ENCODE measurements at regions of chr19 and their contacts with region 1.

Region 1: DNA sequence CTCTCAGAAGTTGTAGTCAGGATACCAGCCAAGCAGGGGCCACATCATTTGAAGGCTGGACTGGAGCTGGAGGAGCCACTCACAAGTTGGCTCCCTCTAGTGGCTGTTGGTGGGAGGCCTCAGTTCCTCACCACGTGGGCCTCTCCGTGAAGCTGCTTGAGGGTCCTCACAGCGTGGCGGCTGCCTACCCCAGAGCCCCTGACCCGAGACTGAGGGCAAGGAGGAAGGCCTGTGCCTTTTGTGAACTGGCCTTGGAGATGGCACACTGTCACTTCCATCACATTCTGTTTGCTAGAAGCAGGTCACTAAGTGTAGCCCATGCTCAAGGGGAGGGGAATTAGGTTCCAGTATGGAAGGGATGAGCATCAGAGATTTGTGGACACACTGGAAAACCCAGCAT is 14.6 kb downstream of the GNA11 start:
- DNase-seq: peak; percentile 79
- H3K4me3 Mint-ChIP-seq: no peak overlapping the region
- H3K27ac Mint-ChIP-seq: no peak overlapping the region
- H3K4me1 Mint-ChIP-seq: peaks cover 7% of the 10 kb centered on the region
- H3K27me3 Mint-ChIP-seq: no peaks in the 10 kb centered on the region

Region 2: GRCh38 chr19:2950286-2951124 is 158.3 kb before region 1 on chr19:
- CTCF ChIA-PET with region 1: interaction called, 204 read pairs
- POLR2A ChIA-PET with region 1: interaction called, 3 read pairs
- intact Hi-C with region 1: no loop called
- DNase-seq: peak; percentile 100
- H3K4me3 Mint-ChIP-seq: peak overlapping the region; percentile 98
- H3K27ac Mint-ChIP-seq: peak overlapping the region; percentile 97
- H3K4me1 Mint-ChIP-seq: peaks cover 25% of the 10 kb centered on the region
- H3K27me3 Mint-ChIP-seq: no peaks in the 10 kb centered on the region

Region 3: GRCh38 chr19:2977001-2977685 is 131.6 kb before region 1 on chr19 and contains the start of gene TLE6:
- CTCF ChIA-PET with region 1: interaction called, 15 read pairs
- POLR2A ChIA-PET with region 1: no interaction called
- intact Hi-C with region 1: no loop called
- DNase-seq: peak; percentile 97
- H3K4me3 Mint-ChIP-seq: peak within 1 kb of the TSS; percentile 89
- H3K27ac Mint-ChIP-seq: peak within 1 kb of the TSS; percentile 72
- H3K4me1 Mint-ChIP-seq: peaks cover 13% of the 10 kb centered on the region
- H3K27me3 Mint-ChIP-seq: peaks cover 7% of the 10 kb centered on the region
- total RNA-seq, gene TLE6: 2.5 to 2.6 TPM

Region 4: DNA sequence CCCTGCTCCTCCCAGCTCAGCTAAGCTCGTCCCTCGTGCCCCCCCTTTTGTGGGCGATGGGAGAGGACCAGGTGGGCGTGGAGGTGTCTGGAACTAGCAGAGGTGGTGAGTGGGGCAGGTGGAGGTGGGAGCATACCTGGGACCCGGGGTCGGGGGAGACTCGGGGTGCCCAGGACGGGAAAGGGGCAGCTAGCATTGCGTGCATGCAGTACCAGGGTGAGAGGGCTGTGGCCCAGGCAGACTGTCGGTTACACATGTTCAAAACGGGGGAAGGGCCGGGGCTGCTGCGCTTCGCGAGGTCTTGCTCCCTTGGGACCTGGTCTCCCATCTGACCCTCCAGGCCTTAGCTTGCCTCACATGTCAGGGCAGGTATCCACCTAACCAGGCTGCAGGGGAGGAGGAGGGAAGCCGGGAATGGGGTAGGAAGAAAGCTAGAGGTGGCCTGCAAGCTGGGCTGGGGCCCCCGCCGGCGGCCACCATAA is 55.5 kb before region 1 on chr19:
- CTCF ChIA-PET with region 1: interaction called, 12 read pairs
- POLR2A ChIA-PET with region 1: no interaction called
- intact Hi-C with region 1: no loop called
- DNase-seq: no peak
- H3K4me3 Mint-ChIP-seq: no peak overlapping the region
- H3K27ac Mint-ChIP-seq: no peak overlapping the region
- H3K4me1 Mint-ChIP-seq: peaks cover 24% of the 10 kb centered on the region
- H3K27me3 Mint-ChIP-seq: no peaks in the 10 kb centered on the region

Region 5: DNA sequence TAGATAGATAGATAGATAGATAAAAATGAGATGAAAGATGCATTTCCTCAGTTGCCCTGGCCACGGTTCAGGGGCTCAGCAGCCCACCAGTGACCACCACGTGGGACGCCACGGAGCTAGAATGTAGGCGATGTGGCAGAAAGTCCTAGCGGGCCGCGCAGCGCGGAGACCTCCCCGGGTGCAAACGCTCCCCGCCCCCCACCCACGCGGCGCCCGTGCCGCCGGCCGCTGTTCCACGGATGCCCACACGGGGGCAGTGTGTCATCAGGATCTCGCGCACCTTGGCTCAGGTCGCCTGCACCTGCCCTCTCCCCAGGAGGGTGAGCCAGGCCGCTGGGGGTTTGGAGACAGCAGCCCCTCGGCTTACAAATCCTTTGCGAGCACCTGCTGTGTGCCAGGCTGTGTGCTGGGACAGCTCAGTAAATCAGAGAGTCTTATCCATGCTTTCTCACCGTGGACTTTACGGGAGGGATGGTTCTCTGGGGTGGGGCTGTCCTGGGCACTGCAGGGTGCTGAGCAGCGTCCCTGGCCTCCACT is 32.8 kb before region 1 on chr19:
- CTCF ChIA-PET with region 1: interaction called, 49 read pairs
- POLR2A ChIA-PET with region 1: no interaction called
- intact Hi-C with region 1: loop called (anchors 2 kb)
- DNase-seq: peak; percentile 85
- H3K4me3 Mint-ChIP-seq: no peak overlapping the region
- H3K27ac Mint-ChIP-seq: no peak overlapping the region
- H3K4me1 Mint-ChIP-seq: peaks cover 4% of the 10 kb centered on the region
- H3K27me3 Mint-ChIP-seq: no peaks in the 10 kb centered on the region

Region 6: GRCh38 chr19:3094601-3095437 is 14.0 kb before region 1 on chr19:
- CTCF ChIA-PET with region 1: interaction called, 10 read pairs
- POLR2A ChIA-PET with region 1: no interaction called
- intact Hi-C with region 1: no loop called
- DNase-seq: peak; percentile 52
- H3K4me3 Mint-ChIP-seq: peak overlapping the region; percentile 71
- H3K27ac Mint-ChIP-seq: no peak overlapping the region
- H3K4me1 Mint-ChIP-seq: peaks cover 22% of the 10 kb centered on the region
- H3K27me3 Mint-ChIP-seq: peaks cover 19% of the 10 kb centered on the region

Region 7: GRCh38 chr19:3171894-3172672 is 63.3 kb after region 1 on chr19:
- CTCF ChIA-PET with region 1: no interaction called
- POLR2A ChIA-PET with region 1: no interaction called
- intact Hi-C with region 1: no loop called
- DNase-seq: no peak
- H3K4me3 Mint-ChIP-seq: no peak overlapping the region
- H3K27ac Mint-ChIP-seq: peak overlapping the region; percentile 42
- H3K4me1 Mint-ChIP-seq: peaks cover 14% of the 10 kb centered on the region
- H3K27me3 Mint-ChIP-seq: no peaks in the 10 kb centered on the region

Region 8: GRCh38 chr19:3263866-3264265 is 155.1 kb after region 1 on chr19:
- CTCF ChIA-PET with region 1: no interaction called
- POLR2A ChIA-PET with region 1: no interaction called
- intact Hi-C with region 1: no loop called
- DNase-seq: no peak
- H3K4me3 Mint-ChIP-seq: no peak overlapping the region
- H3K27ac Mint-ChIP-seq: no peak overlapping the region
- H3K4me1 Mint-ChIP-seq: no peaks in the 10 kb centered on the region
- H3K27me3 Mint-ChIP-seq: peaks cover 11% of the 10 kb centered on the region

Measured in activated CD4-positive, alpha-beta memory T cell treated with anti-CD3 and anti-CD28 coated beads for 36 hours (primary cell).